ENCODE measurements at regions of chr11 and their contacts with region 1.

Region 1: DNA sequence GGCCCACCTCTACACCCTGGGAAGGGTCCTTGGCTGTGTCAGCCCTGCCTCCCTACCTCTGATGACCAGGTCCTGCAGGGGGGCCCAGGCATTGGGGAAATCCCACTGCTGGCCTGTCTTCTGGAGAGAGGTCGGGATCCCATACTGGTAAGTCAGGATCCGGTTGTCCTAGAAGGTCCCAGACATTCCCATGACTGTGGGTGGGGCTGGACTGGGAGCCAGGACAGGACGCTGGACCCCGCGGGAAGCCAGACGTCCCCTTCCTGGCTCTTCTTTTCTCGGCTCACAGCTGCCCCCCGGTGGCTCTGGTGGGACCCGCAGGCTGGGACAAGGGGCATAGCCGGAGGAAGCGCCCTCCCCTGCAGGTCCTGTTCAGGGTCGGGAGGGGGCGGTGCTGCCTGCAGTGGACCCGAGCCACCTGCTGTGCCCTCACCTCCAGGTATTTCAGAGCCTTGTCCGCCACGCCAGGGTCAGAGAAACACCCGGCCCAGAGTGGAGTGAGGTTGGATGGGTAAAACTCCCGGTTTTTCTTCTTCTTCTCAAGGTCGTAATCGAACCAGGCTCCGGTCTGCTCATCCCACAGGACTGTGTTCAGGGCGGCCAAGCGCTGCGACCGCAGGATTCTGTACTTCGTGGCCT is 20.0 kb downstream of the TREH start:
- DNase-seq: peak; percentile 97
- ATAC-seq: peak; percentile 100
- H3K4me3 Mint-ChIP-seq: no peak overlapping the region
- H3K27ac Mint-ChIP-seq: no peak overlapping the region
- H3K4me1 Mint-ChIP-seq: no peaks in the 10 kb centered on the region
- H3K27me3 Mint-ChIP-seq: no peaks in the 10 kb centered on the region
- CTCF ChIP-seq: peak; percentile 99

Region 2: GRCh38 chr11:118634431-118635236 is 24.8 kb before region 1 on chr11:
- CTCF ChIA-PET with region 1: interaction called, 14 read pairs
- POLR2A ChIA-PET with region 1: interaction called, 3 read pairs
- intact Hi-C with region 1: no loop called
- DNase-seq: no peak
- ATAC-seq: peak; percentile 74
- H3K4me3 Mint-ChIP-seq: no peak overlapping the region
- H3K27ac Mint-ChIP-seq: no peak overlapping the region
- H3K4me1 Mint-ChIP-seq: no peaks in the 10 kb centered on the region
- H3K27me3 Mint-ChIP-seq: no peaks in the 10 kb centered on the region
- CTCF ChIP-seq: no peak

Region 3: DNA sequence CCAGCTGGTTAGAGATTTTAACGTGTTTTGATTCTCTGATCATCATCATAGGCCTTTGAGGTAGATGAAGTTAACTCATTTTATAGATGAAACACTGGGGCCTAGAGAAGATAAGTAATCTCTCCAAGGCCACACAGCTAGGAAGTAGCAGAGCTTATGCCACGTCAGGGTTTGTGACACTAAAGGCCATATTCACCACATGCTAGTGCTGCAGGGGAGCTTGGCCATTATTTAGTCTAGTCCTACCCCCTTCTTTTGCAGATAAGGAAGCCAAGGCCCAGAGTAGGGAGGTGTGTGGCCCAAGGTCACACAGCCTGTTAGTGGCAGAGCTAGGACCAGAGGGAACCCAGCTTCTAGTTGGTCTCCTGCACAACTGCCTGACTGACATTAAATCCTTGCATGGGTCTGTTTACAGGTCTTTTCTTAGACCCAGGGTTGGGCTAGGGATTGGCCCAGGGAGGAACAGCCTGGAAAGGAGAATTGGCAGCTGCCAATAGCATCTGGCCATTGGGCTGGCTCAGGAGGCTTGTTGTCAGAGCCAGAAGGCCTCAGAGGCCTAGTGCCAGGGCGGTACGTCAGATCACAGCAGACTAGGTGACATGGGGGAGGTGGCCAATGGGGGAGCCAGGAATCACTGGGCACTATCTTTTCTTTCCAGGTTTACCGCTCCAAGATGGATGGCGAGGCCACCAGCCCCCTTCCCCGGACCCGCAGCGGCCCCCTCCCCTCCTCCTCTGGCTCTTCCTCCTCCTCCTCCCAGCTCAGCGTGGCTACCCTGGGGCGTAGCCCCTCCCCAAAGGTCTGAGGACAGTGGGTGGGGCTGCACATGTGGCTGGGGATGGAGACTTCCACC is 16.1 kb before region 1 on chr11:
- CTCF ChIA-PET with region 1: interaction called, 10 read pairs
- POLR2A ChIA-PET with region 1: interaction called, 4 read pairs
- intact Hi-C with region 1: no loop called
- DNase-seq: no peak
- ATAC-seq: no peak
- H3K4me3 Mint-ChIP-seq: no peak overlapping the region
- H3K27ac Mint-ChIP-seq: no peak overlapping the region
- H3K4me1 Mint-ChIP-seq: no peaks in the 10 kb centered on the region
- H3K27me3 Mint-ChIP-seq: no peaks in the 10 kb centered on the region
- CTCF ChIP-seq: no peak